GM13976 (cell line): ENCODE measurements at regions of chr1 and their contacts with region 1.

Region 1: GRCh38 chr1:107430540-107431228 is 289.8 kb downstream of the NTNG1 start:
- DNase-seq: no peak
- CTCF ChIP-seq: peak; percentile 62

Region 2: DNA sequence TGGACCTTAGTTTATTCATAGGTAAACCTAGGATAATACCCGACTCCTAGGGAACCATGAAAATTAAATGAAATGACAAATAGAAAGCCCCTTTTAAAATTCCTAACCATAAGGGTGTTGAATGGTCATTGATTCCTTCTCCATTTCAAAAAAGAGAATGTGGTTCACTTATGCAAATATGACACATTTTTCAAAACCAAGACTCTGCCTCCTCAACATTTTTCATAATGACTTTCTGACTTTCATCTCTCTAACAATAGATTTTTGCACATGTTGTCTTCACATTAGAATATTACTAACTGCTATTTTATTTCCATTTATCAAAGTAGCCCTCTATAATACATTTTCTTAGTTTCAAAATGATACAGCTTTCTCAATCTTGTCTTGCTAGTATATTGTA is 120.7 kb before region 1 on chr1:
- in situ Hi-C with region 1: no loop called
- DNase-seq: peak; percentile 11
- CTCF ChIP-seq: no peak

Region 3: GRCh38 chr1:107342316-107342715 is 88.4 kb before region 1 on chr1:
- in situ Hi-C with region 1: no loop called
- DNase-seq: no peak
- CTCF ChIP-seq: no peak

Region 4: DNA sequence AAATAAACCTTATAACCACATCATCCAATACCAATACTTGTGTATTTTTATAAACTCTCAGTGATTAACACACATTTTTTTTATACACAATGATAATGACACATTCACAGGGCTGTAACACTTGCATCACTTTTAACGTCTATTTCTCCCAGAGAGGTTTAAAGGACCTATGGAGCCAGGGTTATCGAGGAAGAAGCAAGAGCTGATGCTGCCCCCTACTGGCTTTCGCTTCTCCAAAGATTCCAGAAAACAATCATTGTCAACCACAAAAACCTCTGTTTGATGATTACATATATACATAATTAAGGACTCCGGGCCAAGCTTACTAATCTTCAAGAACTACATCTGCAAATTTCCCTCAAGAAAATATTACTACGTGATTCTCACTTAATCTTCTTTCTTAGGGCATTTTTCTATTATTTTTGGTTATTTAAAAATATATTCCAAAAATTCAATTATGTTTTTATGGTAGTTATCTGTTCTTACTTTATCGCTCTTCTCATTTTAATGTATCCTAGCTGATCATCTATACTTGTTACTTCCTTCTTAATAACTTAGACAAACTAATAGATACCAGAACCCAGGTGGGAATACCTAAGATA is 319.8 kb after region 1 on chr1:
- in situ Hi-C with region 1: loop called (anchors 25 kb)
- DNase-seq: peak; percentile 15
- CTCF ChIP-seq: peak; percentile 40